ENCODE measurements at regions of chr4 and their contacts with region 1.

Region 1: GRCh38 chr4:52051619-52052474 is 743 bp downstream of the SPATA18 start:
- DNase-seq: peak; percentile 85 to 89
- ATAC-seq: peak; percentile 90
- H3K4me3 ChIP-seq: peak overlapping the region; percentile 57 to 71
- H3K27ac ChIP-seq: peak overlapping the region; percentile 31 to 60
- H3K4me1 ChIP-seq: no peaks in the 10 kb centered on the region
- H3K27me3 ChIP-seq: no peaks in the 10 kb centered on the region

Region 2: GRCh38 chr4:52199574-52200338 is 147.9 kb after region 1 on chr4:
- intact Hi-C with region 1: loop called in 1 of 2 experiments (anchors 10 kb)
- DNase-seq: no peak
- ATAC-seq: no peak
- H3K4me3 ChIP-seq: no peak overlapping the region
- H3K27ac ChIP-seq: no peak overlapping the region
- H3K4me1 ChIP-seq: peaks cover 0 to 5% of the 10 kb centered on the region in 2 donors
- H3K27me3 ChIP-seq: no peaks in the 10 kb centered on the region